Pancreas (tissue), 10 donors: ENCODE measurements at regions of chr5 and their contacts with region 1.

Region 1: GRCh38 chr5:7927466-7928375 is 58.8 kb downstream of the MTRR start:
- DNase-seq: peak; percentile 24 to 72 (median 48)
- ATAC-seq: peak; percentile 83 to 99 (median 95)
- H3K4me3 ChIP-seq: no peak overlapping the region
- H3K27ac ChIP-seq: no peak overlapping the region
- H3K4me1 ChIP-seq: no peaks in the 10 kb centered on the region
- H3K27me3 ChIP-seq: no peaks in the 10 kb centered on the region
- CTCF ChIP-seq: peak; percentile 45 to 75 (median 67)

Region 2: GRCh38 chr5:7816535-7816901 is 111.2 kb before region 1 on chr5:
- intact Hi-C with region 1: no loop called
- DNase-seq: no peak
- ATAC-seq: peak; percentile 19 to 31 (median 29)
- H3K4me3 ChIP-seq: no peak overlapping the region
- H3K27ac ChIP-seq: no peak overlapping the region
- H3K4me1 ChIP-seq: no peaks in the 10 kb centered on the region
- H3K27me3 ChIP-seq: no peaks in the 10 kb centered on the region
- CTCF ChIP-seq: no peak

Region 3: DNA sequence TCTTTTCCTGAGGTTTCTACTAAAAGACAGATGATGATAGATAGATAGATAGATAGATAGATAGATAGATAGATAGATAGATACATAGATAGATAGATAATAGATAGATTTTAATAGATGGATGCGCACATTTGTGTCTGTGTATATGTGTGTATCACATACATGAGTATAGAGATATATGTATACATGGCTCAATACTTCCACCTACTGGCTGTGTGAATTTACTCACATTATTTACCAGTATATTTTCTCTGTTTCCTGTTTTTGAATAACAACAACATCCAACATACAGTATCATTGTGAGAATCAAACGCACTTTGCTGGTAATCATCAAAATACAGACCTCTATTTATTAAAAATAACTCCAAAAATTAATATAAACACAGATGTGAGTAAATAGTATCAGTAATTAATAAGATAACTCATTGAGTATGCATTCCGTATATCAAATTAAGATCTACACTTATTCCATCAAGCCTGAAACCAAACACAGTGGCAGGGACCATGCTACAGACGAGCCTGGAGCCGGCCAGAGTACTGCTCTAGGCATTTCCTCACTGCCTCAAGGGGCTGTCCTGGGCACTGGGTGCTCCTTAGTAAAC is 1280.2 kb after region 1 on chr5:
- intact Hi-C with region 1: loop called in 1 of 3 experiments (anchors 10 kb)
- DNase-seq: no peak
- ATAC-seq: peak in 2 of 4 donors; percentile 58 to 74
- H3K4me3 ChIP-seq: no peak overlapping the region
- H3K27ac ChIP-seq: no peak overlapping the region
- H3K4me1 ChIP-seq: no peaks in the 10 kb centered on the region
- H3K27me3 ChIP-seq: no peaks in the 10 kb centered on the region
- CTCF ChIP-seq: peak in 2 of 4 donors; percentile 16 to 17